ENCODE measurements at regions of chr21 and their contacts with region 1.

Region 1: GRCh38 chr21:37220981-37221664 is 46.0 kb downstream of the VPS26C start:
- DNase-seq: peak; percentile 91
- CTCF ChIP-seq: peak; percentile 85

Region 2: GRCh38 chr21:37208056-37208721 is 12.9 kb before region 1 on chr21:
- CTCF ChIA-PET with region 1: interaction called, 22 read pairs
- POLR2A ChIA-PET with region 1: no interaction called
- DNase-seq: peak; percentile 85
- CTCF ChIP-seq: no peak

Measured in GM10248 (cell line).